ENCODE measurements at regions of chr2 and their contacts with region 1.

Region 1: DNA sequence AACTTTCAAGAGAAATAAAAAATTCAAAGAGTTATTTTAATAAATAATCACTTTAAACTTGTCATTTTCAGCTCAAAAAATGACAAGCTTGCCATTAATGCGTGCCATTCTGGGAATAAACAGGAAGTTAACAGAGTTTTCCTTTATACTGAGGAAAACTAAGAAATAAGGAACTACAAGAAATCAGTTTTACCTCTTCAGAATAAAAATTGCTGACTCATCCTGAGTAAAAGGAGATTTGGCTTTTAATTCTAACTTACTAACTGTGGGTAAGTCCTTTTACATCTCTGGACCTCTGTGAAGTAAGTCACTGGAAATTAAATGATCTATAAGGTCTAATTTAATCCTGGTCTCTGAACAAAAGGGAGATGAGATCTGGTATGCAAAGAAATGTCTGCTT is 16.1 kb downstream of the CEBPZ start:
- DNase-seq: no peak
- ATAC-seq: no peak
- H3K4me3 ChIP-seq: no peak overlapping the region
- H3K27ac ChIP-seq: peak overlapping the region; percentile 16
- H3K4me1 ChIP-seq: no peaks in the 10 kb centered on the region
- H3K27me3 ChIP-seq: no peaks in the 10 kb centered on the region
- CTCF ChIP-seq: no peak

Region 2: DNA sequence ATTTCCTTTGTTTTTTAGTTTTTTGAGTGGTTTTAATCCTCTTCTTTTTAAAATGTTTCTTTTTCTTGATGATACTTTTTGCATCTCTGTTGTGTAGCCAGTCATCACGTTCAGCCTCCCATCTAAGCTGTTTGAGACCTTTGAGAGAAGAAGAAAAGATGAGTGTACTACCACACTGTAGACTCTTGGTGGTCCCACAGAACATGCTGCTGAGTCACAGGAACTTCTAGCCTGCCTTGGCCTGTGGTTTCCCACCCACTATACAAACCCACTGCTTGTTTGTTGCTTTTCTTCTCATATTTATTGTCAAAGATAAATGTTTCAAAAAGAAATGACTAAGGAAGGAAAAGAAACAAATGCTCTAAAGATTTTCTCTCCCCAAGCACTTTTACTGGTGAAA is 13.5 kb before region 1 on chr2:
- CTCF ChIA-PET with region 1: no interaction called
- POLR2A ChIA-PET with region 1: interaction called, 14 read pairs
- intact Hi-C with region 1: no loop called
- DNase-seq: no peak
- ATAC-seq: no peak
- H3K4me3 ChIP-seq: no peak overlapping the region
- H3K27ac ChIP-seq: no peak overlapping the region
- H3K4me1 ChIP-seq: peaks cover 16% of the 10 kb centered on the region
- H3K27me3 ChIP-seq: no peaks in the 10 kb centered on the region
- CTCF ChIP-seq: no peak